ENCODE measurements at regions of chr2 and their contacts with region 1.

Region 1: GRCh38 chr2:218671654-218672566 is at the starts of genes RNF25 and STK36:
- DNase-seq: peak; percentile 56 to 90 (median 82)
- ATAC-seq: peak; percentile 92
- H3K4me3 ChIP-seq: peak within 1 kb of the TSS; percentile 80 to 86
- H3K4me3 Mint-ChIP-seq: peak within 1 kb of the TSS; percentile 97
- H3K27ac ChIP-seq: peak within 1 kb of the TSS; percentile 74 to 83
- H3K27ac Mint-ChIP-seq: peak within 1 kb of the TSS; percentile 96
- H3K4me1 ChIP-seq: peaks cover 16% of the 10 kb centered on the region
- H3K4me1 Mint-ChIP-seq: peaks cover 25% of the 10 kb centered on the region
- H3K27me3 ChIP-seq: no peaks in the 10 kb centered on the region
- H3K27me3 Mint-ChIP-seq: no peaks in the 10 kb centered on the region
- CTCF ChIP-seq: no peak
- total RNA-seq, gene RNF25: 26.0 to 29.3 TPM
- total RNA-seq, gene STK36: 7.5 to 8.1 TPM

Region 2: DNA sequence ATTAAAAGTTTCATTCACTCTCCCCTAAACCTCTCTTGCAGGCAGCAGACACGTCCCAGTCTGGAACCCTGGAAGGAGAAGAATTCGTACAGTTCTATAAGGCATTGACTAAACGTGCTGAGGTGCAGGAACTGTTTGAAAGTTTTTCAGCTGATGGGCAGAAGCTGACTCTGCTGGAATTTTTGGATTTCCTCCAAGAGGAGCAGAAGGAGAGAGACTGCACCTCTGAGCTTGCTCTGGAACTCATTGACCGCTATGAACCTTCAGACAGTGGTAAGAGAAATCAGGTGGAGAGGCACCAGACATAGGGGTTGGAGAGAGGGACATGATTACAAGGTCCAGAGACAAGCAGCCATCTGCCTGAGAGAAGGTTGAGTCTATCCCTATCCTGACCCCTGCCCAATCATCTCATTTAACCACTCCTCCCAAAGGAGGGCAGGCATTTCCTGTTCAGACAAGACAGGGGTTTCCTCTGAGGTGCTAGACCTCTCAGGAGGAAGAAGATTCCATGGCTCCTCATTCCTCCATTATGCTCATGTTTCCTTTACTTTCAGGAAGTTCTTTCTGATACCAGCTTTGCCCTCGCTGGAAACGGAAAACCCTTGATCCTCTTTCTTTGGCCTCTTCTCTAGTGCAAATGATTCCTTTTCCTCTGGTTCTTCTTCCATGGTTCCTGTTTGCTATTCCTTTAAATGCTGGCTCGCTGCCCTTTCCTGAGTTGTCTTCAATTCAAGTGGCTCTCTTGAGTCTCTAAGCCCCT is 49.1 kb before region 1 on chr2:
- CTCF ChIA-PET with region 1: no interaction called
- POLR2A ChIA-PET with region 1: no interaction called
- intact Hi-C with region 1: no loop called
- DNase-seq: no peak
- ATAC-seq: no peak
- H3K4me3 ChIP-seq: no peak overlapping the region
- H3K4me3 Mint-ChIP-seq: no peak overlapping the region
- H3K27ac ChIP-seq: no peak overlapping the region
- H3K27ac Mint-ChIP-seq: no peak overlapping the region
- H3K4me1 ChIP-seq: no peaks in the 10 kb centered on the region
- H3K4me1 Mint-ChIP-seq: no peaks in the 10 kb centered on the region
- H3K27me3 ChIP-seq: no peaks in the 10 kb centered on the region
- H3K27me3 Mint-ChIP-seq: no peaks in the 10 kb centered on the region
- CTCF ChIP-seq: no peak

Region 3: GRCh38 chr2:218710687-218711549 is 39.0 kb after region 1 on chr2 and contains the start of gene TTLL4:
- CTCF ChIA-PET with region 1: interaction called, 5 read pairs
- POLR2A ChIA-PET with region 1: interaction called, 8 read pairs
- intact Hi-C with region 1: loop called (anchors 1 kb)
- DNase-seq: peak; percentile 97 to 99 (median 99)
- ATAC-seq: peak; percentile 99
- H3K4me3 ChIP-seq: peak within 1 kb of the TSS; percentile 86 to 92
- H3K4me3 Mint-ChIP-seq: peak within 1 kb of the TSS; percentile 91
- H3K27ac ChIP-seq: peak within 1 kb of the TSS; percentile 73 to 90
- H3K27ac Mint-ChIP-seq: peak within 1 kb of the TSS; percentile 84
- H3K4me1 ChIP-seq: peaks cover 13% of the 10 kb centered on the region
- H3K4me1 Mint-ChIP-seq: peaks cover 19% of the 10 kb centered on the region
- H3K27me3 ChIP-seq: no peaks in the 10 kb centered on the region
- H3K27me3 Mint-ChIP-seq: peaks cover 6% of the 10 kb centered on the region
- CTCF ChIP-seq: peak; percentile 76
- total RNA-seq, gene TTLL4: 6.9 to 8.1 TPM